Naive thymus-derived CD4-positive, alpha-beta T cell (primary cell): ENCODE measurements at regions of chr22 and their contacts with region 1.

Region 1: DNA sequence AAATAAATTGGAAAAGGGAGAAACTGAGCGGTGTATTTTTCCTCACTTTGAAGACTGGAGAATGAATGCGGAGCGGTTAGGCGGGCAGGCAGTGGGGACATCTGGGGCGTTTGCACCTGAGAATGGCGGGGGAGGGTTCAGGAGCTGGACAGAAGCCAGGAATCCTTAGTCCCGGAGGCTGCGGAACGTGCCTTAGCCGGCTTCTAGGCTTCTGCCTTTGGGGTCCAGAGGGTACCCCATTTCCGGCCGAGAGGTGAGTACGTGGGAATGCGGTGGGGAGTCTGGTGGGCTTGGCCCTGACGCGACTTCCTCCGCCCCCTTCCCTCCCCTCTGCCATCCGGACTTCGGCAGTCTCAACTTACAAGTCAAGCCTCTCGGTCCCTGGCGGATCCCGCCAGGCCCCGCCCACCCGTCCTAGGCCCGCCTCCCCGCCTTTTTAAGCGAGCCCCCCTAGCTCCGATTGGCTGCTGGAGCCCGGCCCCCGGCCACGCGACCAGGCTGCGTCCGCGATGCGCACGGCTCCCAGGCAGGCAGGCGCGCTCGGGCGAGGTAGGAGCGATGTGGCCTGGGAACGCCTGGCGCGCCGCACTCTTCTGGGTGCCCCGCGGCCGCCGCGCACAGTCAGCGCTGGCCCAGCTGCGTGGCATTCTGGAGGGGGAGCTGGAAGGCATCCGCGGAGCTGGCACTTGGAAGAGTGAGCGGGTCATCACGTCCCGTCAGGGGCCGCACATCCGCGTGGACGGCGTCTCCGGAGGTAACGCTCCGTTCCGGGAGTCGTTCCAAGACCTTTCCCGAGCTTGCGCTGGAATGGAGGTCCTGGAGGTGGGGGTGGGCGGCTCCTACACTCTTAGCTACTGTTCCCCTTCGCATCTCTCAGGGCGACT is at the start of gene GCAT:
- DNase-seq: peak; percentile 61 to 92 (median 71)
- ATAC-seq: peak; percentile 94
- H3K4me3 ChIP-seq: peak within 1 kb of the TSS; percentile 58
- H3K4me3 Mint-ChIP-seq: peak within 1 kb of the TSS; percentile 67 to 90 (median 80)
- H3K27ac ChIP-seq: peak within 1 kb of the TSS; percentile 44
- H3K27ac Mint-ChIP-seq: peak within 1 kb of the TSS in 6 of 9 donors; percentile 8 to 65 (median 44)
- H3K4me1 ChIP-seq: peaks cover 14 to 30% of the 10 kb centered on the region in 2 donors
- H3K4me1 Mint-ChIP-seq: peaks cover 15 to 51% (median 43%) of the 10 kb centered on the region in 7 donors
- H3K27me3 ChIP-seq: peaks cover 0 to 25% of the 10 kb centered on the region in 2 donors
- H3K27me3 Mint-ChIP-seq: peaks cover 4 to 38% (median 23%) of the 10 kb centered on the region in 5 donors
- total RNA-seq, gene GCAT: 1.1 to 14.6 (median 5.4) TPM

Region 2: DNA sequence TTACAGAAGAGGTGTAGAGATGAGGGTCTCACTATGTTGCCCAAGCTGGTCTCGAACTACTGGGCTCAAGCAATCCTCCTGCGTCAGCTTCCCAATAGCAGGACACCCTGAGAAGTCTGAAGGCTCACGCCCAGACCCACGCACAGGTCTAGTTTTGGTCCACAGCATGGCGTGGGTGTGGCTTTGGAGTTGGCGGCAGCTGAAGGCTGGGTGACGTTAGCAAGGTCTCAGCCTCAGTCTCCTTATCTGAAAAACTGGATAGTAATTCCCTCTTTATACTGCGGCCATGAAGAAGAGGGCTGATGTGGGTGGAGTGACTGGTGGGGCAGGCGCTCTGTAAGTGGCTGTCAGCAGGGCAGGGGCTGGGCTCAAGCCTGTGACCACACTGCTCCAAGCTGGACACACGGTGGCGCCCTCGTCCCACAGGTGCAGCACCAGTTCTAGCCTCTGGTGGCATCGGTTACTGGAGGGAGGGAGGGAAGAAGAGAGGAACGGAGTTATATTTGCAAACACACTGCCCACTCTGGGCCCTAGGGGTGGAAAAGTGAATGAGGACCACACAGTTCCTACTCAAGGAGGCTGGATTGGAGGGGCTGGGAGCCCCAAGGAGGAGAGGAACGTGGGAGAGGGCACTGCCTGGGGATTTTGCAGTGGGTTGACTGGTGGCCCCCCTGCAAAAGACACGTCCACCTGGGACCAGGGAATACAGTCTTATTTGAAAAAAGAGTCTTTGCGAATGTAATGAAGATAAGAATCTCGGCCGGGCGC is 268.9 kb before region 1 on chr22:
- CTCF ChIA-PET with region 1: no interaction called
- POLR2A ChIA-PET with region 1: no interaction called
- intact Hi-C with region 1: loop called in 1 of 2 experiments (anchors 10 kb)
- DNase-seq: peak; percentile 78 to 90 (median 87)
- ATAC-seq: peak; percentile 99
- H3K4me3 ChIP-seq: no peak overlapping the region
- H3K4me3 Mint-ChIP-seq: peak overlapping the region; percentile 15 to 64 (median 48)
- H3K27ac ChIP-seq: no peak overlapping the region
- H3K27ac Mint-ChIP-seq: peak overlapping the region in 5 of 9 donors; percentile 1 to 37 (median 7)
- H3K4me1 ChIP-seq: peaks cover 8 to 14% of the 10 kb centered on the region in 2 donors
- H3K4me1 Mint-ChIP-seq: peaks cover 14 to 44% (median 17%) of the 10 kb centered on the region in 7 donors
- H3K27me3 ChIP-seq: peaks cover 0 to 4% of the 10 kb centered on the region in 2 donors
- H3K27me3 Mint-ChIP-seq: peaks cover 4 to 18% (median 12%) of the 10 kb centered on the region in 5 donors

Region 3: GRCh38 chr22:37686002-37686982 is 121.4 kb before region 1 on chr22 and contains the start of gene NOL12:
- CTCF ChIA-PET with region 1: no interaction called
- POLR2A ChIA-PET with region 1: no interaction called
- intact Hi-C with region 1: loop called in 1 of 2 experiments (anchors 10 kb)
- DNase-seq: peak; percentile 63 to 82 (median 78)
- ATAC-seq: peak; percentile 91
- H3K4me3 ChIP-seq: peak within 1 kb of the TSS; percentile 82
- H3K4me3 Mint-ChIP-seq: peak within 1 kb of the TSS; percentile 93 to 98 (median 96)
- H3K27ac ChIP-seq: peak within 1 kb of the TSS; percentile 84
- H3K27ac Mint-ChIP-seq: peak within 1 kb of the TSS; percentile 88 to 99 (median 95)
- H3K4me1 ChIP-seq: peaks cover 18 to 22% of the 10 kb centered on the region in 2 donors
- H3K4me1 Mint-ChIP-seq: peaks cover 16 to 39% (median 33%) of the 10 kb centered on the region in 7 donors
- H3K27me3 ChIP-seq: no peaks in the 10 kb centered on the region
- H3K27me3 Mint-ChIP-seq: no peaks in the 10 kb centered on the region
- total RNA-seq, gene NOL12: 32.8 to 52.5 (median 45.3) TPM

Region 4: DNA sequence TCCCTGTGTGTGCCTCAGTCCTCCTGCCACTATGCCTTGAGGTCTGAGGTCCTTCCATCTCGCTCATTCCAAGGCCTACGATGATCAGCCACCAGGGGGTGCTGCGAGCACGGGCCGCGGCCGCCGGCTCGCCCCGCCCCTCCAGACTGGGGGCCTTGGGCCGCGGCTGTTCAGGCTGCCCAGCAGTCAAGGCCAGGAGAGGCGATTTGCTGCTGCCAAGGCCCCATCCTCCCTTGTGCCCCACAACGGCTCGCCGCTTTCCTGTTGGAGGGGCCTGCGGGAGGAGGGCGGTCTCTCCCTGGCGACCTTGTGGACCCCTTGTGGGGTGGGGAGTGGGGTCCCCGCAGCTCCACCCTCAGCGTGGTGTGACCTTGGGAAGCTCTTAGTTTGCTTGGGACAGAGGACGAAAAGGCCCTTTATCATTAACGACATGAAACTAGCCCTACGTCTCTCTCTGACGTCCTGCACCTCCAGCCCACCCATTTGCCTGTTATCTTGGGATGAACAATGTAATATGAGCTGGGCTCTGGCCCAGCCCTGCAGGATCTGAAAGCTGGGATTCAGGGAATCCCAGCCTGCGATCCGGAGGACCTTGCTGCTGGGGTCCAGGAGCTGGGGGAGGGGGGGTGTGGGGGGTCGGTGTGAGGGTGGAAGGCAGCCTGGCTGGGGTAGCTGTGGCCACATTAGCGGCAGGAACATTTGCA is 10.2 kb after region 1 on chr22:
- CTCF ChIA-PET with region 1: interaction called, 5 read pairs
- POLR2A ChIA-PET with region 1: no interaction called
- intact Hi-C with region 1: loop called in 1 of 2 experiments (anchors 1 kb)
- DNase-seq: peak; percentile 44 to 92 (median 72)
- ATAC-seq: peak; percentile 92
- H3K4me3 ChIP-seq: peak overlapping the region; percentile 61
- H3K4me3 Mint-ChIP-seq: peak overlapping the region in 9 of 10 donors; percentile 34 to 74 (median 52)
- H3K27ac ChIP-seq: no peak overlapping the region
- H3K27ac Mint-ChIP-seq: no peak overlapping the region
- H3K4me1 ChIP-seq: peaks cover 10% of the 10 kb centered on the region in 2 donors
- H3K4me1 Mint-ChIP-seq: peaks cover 0 to 16% (median 11%) of the 10 kb centered on the region in 7 donors
- H3K27me3 ChIP-seq: no peaks in the 10 kb centered on the region
- H3K27me3 Mint-ChIP-seq: peaks cover 9 to 33% (median 20%) of the 10 kb centered on the region in 5 donors

Region 5: GRCh38 chr22:38181453-38182247 is 374.0 kb after region 1 on chr22 and contains the start of gene PLA2G6:
- CTCF ChIA-PET with region 1: no interaction called
- POLR2A ChIA-PET with region 1: no interaction called
- intact Hi-C with region 1: loop called in 1 of 2 experiments (anchors 10 kb)
- DNase-seq: peak; percentile 86 to 99 (median 90)
- ATAC-seq: peak; percentile 96
- H3K4me3 ChIP-seq: peak within 1 kb of the TSS; percentile 90
- H3K4me3 Mint-ChIP-seq: peak within 1 kb of the TSS; percentile 88 to 100 (median 94)
- H3K27ac ChIP-seq: peak within 1 kb of the TSS; percentile 67
- H3K27ac Mint-ChIP-seq: peak within 1 kb of the TSS; percentile 36 to 94 (median 89)
- H3K4me1 ChIP-seq: peaks cover 16 to 30% of the 10 kb centered on the region in 2 donors
- H3K4me1 Mint-ChIP-seq: peaks cover 34 to 50% (median 42%) of the 10 kb centered on the region in 7 donors
- H3K27me3 ChIP-seq: no peaks in the 10 kb centered on the region
- H3K27me3 Mint-ChIP-seq: peaks cover 0 to 14% (median 0%) of the 10 kb centered on the region in 5 donors
- total RNA-seq, gene PLA2G6: 66.5 to 252 (median 105) TPM

Region 6: DNA sequence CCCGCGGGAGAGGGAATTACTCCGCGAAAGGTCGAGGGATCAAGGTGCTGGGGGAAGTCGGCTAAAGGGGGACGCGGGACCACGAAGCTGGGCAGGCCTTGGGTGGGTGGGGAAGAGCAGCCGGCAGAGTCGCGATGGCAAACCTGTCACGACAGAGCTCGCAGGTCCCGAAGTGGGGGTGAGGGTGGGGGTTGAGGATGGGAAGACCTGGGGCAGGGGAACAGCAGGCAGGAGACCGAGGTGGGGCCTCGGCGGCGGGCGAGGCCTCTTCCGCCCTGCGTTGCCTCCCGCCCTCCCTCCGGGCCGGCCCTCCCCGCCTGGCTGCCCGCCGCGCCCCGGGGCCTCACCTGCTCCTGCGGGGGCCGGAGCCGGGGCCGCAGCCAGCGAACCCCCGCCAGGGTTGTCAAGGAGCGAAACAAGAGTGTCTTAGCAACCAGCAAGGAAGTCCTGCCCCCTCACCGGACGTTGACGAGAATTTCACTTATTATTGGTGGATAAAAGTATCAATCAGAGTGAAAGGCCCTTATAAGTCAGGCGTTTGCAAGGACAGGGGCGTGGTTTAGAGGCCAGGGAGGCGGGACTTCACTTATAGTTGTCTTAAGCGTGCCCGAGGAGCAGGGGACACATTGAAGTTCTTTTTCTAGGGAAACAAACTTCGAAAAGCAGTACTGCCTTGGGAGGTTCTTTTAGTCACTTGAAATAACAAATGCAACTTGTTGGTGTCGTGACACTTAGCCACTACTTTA is 986.2 kb after region 1 on chr22 and contains the start of gene DNAL4:
- CTCF ChIA-PET with region 1: no interaction called
- POLR2A ChIA-PET with region 1: no interaction called
- intact Hi-C with region 1: loop called in 1 of 2 experiments (anchors 5 kb)
- DNase-seq: peak; percentile 64 to 95 (median 93)
- ATAC-seq: peak; percentile 99
- H3K4me3 ChIP-seq: peak within 1 kb of the TSS; percentile 75
- H3K4me3 Mint-ChIP-seq: peak within 1 kb of the TSS; percentile 86 to 97 (median 92)
- H3K27ac ChIP-seq: peak within 1 kb of the TSS; percentile 89
- H3K27ac Mint-ChIP-seq: peak within 1 kb of the TSS; percentile 78 to 96 (median 91)
- H3K4me1 ChIP-seq: peaks cover 13 to 26% of the 10 kb centered on the region in 2 donors
- H3K4me1 Mint-ChIP-seq: peaks cover 20 to 44% (median 34%) of the 10 kb centered on the region in 7 donors
- H3K27me3 ChIP-seq: no peaks in the 10 kb centered on the region
- H3K27me3 Mint-ChIP-seq: peaks cover 0 to 27% (median 0%) of the 10 kb centered on the region in 5 donors
- total RNA-seq, gene DNAL4: 5.0 to 11.1 (median 8.9) TPM